ENCODE measurements at regions of chr4 and their contacts with region 1.

Region 1: GRCh38 chr4:177441803-177442622 is at the start of gene AGA:
- DNase-seq: peak; percentile 78 to 90
- H3K4me3 ChIP-seq: peak within 1 kb of the TSS; percentile 69 to 81 (median 76)
- H3K27ac ChIP-seq: peak within 1 kb of the TSS; percentile 92
- H3K4me1 ChIP-seq: peaks cover 2 to 7% (median 4%) of the 10 kb centered on the region in 4 experiments; a peak in 5 of 7 replicates
- H3K27me3 ChIP-seq: no peaks in the 10 kb centered on the region
- CTCF ChIP-seq: no peak
- EP300 ChIP-seq: no peak
- POLR2A ChIP-seq: peak; percentile 88 to 99
- RAD21 ChIP-seq: no peak
- total RNA-seq, gene AGA: 8.1 and 8.5 TPM in 2 replicates

Region 2: GRCh38 chr4:177190995-177191568 is 250.9 kb before region 1 on chr4:
- CTCF ChIA-PET with region 1: no interaction called
- POLR2A ChIA-PET with region 1: no interaction called
- DNase-seq: no peak
- H3K4me3 ChIP-seq: no peak overlapping the region
- H3K27ac ChIP-seq: no peak overlapping the region; the same call in 1 of the 2 replicates
- H3K4me1 ChIP-seq: peaks cover 0 to 5% (median 0%) of the 10 kb centered on the region in 4 experiments; a peak in 1 of 7 replicates
- H3K27me3 ChIP-seq: no peaks in the 10 kb centered on the region
- CTCF ChIP-seq: no peak
- EP300 ChIP-seq: no peak
- POLR2A ChIP-seq: no peak
- RAD21 ChIP-seq: no peak

Region 3: DNA sequence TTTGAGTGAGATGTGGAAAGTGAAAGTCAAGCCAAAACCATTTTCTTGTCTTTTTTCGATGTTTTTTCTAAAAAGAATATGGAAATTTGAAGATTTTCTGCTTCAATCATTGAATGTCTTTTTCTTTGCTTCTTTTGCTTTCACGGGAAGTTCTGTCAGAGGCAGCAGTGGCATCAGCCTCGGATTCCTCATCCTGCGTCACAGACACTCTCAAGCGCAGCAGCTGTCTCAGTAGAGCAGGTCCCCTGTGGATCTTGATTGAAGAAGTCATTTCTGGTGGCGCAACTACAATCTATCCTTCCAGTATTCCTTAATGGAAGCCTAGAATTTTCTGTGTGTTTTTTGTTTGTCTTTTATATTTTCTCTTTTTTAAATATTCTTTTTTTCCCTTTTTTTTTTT is 185.1 kb before region 1 on chr4:
- CTCF ChIA-PET with region 1: no interaction called
- POLR2A ChIA-PET with region 1: no interaction called
- DNase-seq: no peak
- H3K4me3 ChIP-seq: no peak overlapping the region
- H3K27ac ChIP-seq: no peak overlapping the region
- H3K4me1 ChIP-seq: 0 out of 7 replicates have a peak, but pooled peaks cover 0 to 4% (median 0%) of the 10 kb centered on the region in 4 experiments
- H3K27me3 ChIP-seq: no peaks in the 10 kb centered on the region; a peak in 1 of 7 replicates
- CTCF ChIP-seq: no peak
- EP300 ChIP-seq: no peak
- POLR2A ChIP-seq: no peak
- RAD21 ChIP-seq: no peak

Region 4: DNA sequence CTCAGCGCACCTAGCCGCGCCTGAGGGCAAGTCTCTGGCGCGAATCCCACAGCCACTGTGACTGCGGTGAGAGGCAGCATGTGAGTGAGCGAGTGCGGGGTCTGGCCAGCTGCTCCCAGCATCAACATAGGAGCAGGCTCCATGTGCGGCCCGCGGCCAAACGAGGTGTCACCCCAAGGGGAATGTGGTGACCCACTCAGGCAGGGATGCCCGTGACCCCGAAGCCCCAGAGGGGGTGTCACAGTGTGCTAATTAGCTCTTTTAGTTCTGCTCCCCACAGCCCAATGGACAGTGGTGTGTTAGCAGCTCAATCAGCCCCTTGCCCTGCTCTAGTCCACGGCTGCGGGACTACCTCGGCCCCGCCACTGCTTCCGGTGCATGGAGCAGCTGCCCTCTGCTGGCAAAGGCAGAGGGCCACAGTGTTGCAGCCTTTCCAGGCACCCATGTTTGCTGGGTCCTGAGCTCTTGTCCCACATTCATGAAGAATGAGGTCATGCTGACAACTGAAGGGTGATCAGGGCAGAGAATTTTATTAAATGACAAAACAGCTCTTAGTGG is 61.2 kb before region 1 on chr4:
- CTCF ChIA-PET with region 1: interaction called, 3 read pairs
- POLR2A ChIA-PET with region 1: interaction called, 14 read pairs
- DNase-seq: peak; percentile 65 to 72
- H3K4me3 ChIP-seq: no peak overlapping the region
- H3K27ac ChIP-seq: no peak overlapping the region
- H3K4me1 ChIP-seq: no peaks in the 10 kb centered on the region; a peak in 2 of 7 replicates
- H3K27me3 ChIP-seq: no peaks in the 10 kb centered on the region
- CTCF ChIP-seq: peak; percentile 83 to 98 (median 97)
- EP300 ChIP-seq: no peak
- POLR2A ChIP-seq: no peak
- RAD21 ChIP-seq: peak; percentile 86 to 88

Region 5: GRCh38 chr4:177455561-177455970 is 13.6 kb after region 1 on chr4:
- CTCF ChIA-PET with region 1: interaction called, 3 read pairs
- POLR2A ChIA-PET with region 1: interaction called, 32 read pairs
- DNase-seq: no peak
- H3K4me3 ChIP-seq: no peak overlapping the region
- H3K27ac ChIP-seq: no peak overlapping the region
- H3K4me1 ChIP-seq: no peaks in the 10 kb centered on the region
- H3K27me3 ChIP-seq: no peaks in the 10 kb centered on the region
- CTCF ChIP-seq: no peak
- EP300 ChIP-seq: no peak
- POLR2A ChIP-seq: no peak
- RAD21 ChIP-seq: no peak

Region 6: DNA sequence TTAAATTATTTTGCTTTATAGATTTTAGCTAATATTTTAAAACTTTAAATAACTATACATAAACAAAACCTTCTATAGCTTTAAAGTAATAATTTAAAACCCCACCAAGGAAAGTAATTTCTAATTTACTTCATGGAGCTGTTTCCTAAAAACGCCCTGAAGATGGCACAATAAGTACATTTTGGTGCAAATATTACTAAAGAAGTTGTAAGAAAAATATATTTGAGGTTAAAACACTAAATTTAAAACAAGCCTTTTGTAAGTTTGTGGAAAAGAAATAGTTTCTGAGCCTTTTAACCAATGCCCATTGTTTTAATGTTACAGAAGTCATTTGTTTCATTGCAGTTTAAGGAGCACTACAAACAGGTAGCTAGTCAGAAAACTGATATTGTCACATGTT is 137.6 kb after region 1 on chr4:
- CTCF ChIA-PET with region 1: no interaction called
- POLR2A ChIA-PET with region 1: no interaction called
- DNase-seq: no peak
- H3K4me3 ChIP-seq: no peak overlapping the region
- H3K27ac ChIP-seq: no peak overlapping the region
- H3K4me1 ChIP-seq: no peaks in the 10 kb centered on the region
- H3K27me3 ChIP-seq: no peaks in the 10 kb centered on the region
- CTCF ChIP-seq: no peak
- EP300 ChIP-seq: no peak
- POLR2A ChIP-seq: no peak
- RAD21 ChIP-seq: peak in 1 of 2 experiments; percentile 16; a peak in 2 of 4 replicates

Region 7: GRCh38 chr4:177855507-177856197 is 413.6 kb after region 1 on chr4:
- CTCF ChIA-PET with region 1: no interaction called
- POLR2A ChIA-PET with region 1: no interaction called
- DNase-seq: no peak
- H3K4me3 ChIP-seq: no peak overlapping the region
- H3K27ac ChIP-seq: no peak overlapping the region
- H3K4me1 ChIP-seq: peaks cover 0 to 6% (median 5%) of the 10 kb centered on the region in 4 experiments; a peak in 4 of 7 replicates
- H3K27me3 ChIP-seq: no peaks in the 10 kb centered on the region
- CTCF ChIP-seq: no peak
- EP300 ChIP-seq: no peak
- POLR2A ChIP-seq: no peak
- RAD21 ChIP-seq: no peak

Measured in H1 (cell line).